ENCODE measurements at regions of chr7 and their contacts with region 1.

Region 1: GRCh38 chr7:78033410-78033809 is 234.8 kb downstream of the PHTF2 start:
- DNase-seq: no peak
- H3K4me3 ChIP-seq: no peak overlapping the region
- H3K27ac ChIP-seq: no peak overlapping the region
- H3K4me1 ChIP-seq: no peaks in the 10 kb centered on the region
- H3K27me3 ChIP-seq: peaks cover 39% of the 10 kb centered on the region
- CTCF ChIP-seq: no peak

Region 2: DNA sequence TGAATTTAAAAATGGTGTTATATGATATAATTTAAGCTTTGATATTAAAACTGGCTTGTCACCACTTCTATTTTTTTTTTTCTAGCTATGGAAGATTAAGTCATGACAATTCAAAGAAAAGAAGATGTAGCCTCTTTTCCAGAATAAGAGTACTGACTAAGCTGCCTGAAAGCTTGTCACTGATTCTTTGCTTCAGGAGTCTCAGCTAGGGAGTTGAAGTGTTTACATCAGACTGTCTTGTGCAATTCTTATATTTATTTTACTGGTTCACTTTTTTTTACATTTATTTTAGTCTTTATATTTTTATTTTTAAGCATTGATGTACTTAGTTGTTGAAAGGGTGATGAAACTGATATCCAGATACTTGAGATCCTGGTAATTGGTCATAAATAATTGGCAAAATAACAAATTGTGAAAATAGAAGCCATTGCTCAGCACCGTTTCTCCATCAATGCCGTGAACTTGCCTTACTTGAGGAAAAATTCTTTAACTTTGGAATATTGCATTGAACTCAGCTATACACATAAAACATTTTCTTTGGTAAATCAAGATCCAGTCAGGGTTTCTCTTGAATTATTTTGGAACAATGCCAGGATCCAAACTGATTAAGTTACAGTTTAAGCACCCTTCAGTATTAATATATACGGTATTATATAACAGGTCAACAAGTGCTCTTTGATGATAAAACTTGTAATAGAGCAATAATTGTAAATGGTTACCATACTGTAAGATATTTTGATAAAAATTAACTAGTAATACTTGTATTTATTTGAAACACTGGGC is 78.4 kb before region 1 on chr7:
- CTCF ChIA-PET with region 1: no interaction called
- POLR2A ChIA-PET with region 1: interaction called, 13 read pairs
- intact Hi-C with region 1: no loop called
- DNase-seq: no peak
- H3K4me3 ChIP-seq: no peak overlapping the region
- H3K27ac ChIP-seq: no peak overlapping the region
- H3K4me1 ChIP-seq: no peaks in the 10 kb centered on the region
- H3K27me3 ChIP-seq: no peaks in the 10 kb centered on the region
- CTCF ChIP-seq: no peak

Region 3: DNA sequence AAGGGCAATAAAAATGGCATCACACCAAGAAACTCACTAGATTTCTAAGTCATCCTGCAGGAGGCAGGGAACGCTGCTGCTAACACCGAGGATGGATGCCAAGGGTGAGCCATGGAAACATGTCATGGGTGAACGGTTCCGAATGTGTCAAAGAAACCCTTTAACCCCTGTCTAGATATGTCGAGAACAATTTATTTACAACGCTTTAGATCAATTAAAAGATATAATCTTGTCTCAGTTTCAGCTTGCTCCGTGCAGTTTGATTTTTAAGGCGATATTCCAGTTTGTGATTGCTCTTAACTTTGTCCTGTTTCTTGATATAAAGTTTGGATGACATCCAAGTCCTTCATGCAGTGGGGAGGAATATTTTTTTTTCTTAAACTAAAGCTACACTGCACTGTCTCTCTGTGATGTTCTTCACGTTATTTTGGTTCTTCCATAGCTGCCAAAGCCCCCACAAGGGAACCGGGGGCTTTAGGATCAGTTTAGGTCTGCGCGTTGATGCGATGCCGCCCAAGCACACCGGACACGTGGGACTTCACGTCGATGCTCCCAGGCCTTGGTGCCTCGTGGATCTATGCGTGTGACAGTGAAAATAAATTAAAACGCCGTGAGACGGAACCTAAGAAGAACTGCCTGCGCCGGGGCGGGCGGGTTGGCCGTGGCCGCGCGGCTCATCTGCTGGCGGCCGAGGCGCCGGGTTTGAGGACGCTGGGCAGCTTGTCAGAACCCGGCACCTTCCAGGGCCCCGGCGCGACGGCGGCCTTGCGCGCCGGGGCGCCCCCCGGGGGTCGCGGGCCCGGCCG is 14.6 kb before region 1 on chr7:
- CTCF ChIA-PET with region 1: no interaction called
- POLR2A ChIA-PET with region 1: no interaction called
- intact Hi-C with region 1: no loop called
- DNase-seq: peak in 1 of 2 experiments; percentile 18
- H3K4me3 ChIP-seq: peak overlapping the region; percentile 42; the same call in 1 of the 2 replicates
- H3K27ac ChIP-seq: no peak overlapping the region
- H3K4me1 ChIP-seq: no peaks in the 10 kb centered on the region
- H3K27me3 ChIP-seq: peaks cover 18% of the 10 kb centered on the region; the same call in 1 of the 2 replicates
- CTCF ChIP-seq: no peak

Region 4: DNA sequence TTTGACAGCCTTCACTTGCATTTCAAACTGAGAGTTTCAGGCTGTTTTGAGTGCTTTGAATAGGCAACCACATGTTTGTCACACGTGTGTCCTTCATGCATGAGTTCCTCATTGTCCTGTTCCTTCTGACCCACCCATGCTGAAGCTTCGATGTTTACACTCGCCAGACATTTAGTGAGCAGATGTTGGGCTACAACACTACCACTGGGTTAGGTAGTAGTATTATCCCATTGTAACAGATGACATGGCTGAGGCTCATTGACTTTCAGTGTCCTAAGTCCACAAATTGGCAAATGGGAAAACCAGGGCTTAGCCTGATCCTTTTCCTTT is 221.3 kb after region 1 on chr7:
- CTCF ChIA-PET with region 1: no interaction called
- POLR2A ChIA-PET with region 1: no interaction called
- intact Hi-C with region 1: no loop called
- DNase-seq: no peak
- H3K4me3 ChIP-seq: no peak overlapping the region
- H3K27ac ChIP-seq: no peak overlapping the region
- H3K4me1 ChIP-seq: no peaks in the 10 kb centered on the region
- H3K27me3 ChIP-seq: no peaks in the 10 kb centered on the region
- CTCF ChIP-seq: no peak

Measured in PC-9 (cell line).